ENCODE measurements at regions of chr18 and their contacts with region 1.

Region 1: DNA sequence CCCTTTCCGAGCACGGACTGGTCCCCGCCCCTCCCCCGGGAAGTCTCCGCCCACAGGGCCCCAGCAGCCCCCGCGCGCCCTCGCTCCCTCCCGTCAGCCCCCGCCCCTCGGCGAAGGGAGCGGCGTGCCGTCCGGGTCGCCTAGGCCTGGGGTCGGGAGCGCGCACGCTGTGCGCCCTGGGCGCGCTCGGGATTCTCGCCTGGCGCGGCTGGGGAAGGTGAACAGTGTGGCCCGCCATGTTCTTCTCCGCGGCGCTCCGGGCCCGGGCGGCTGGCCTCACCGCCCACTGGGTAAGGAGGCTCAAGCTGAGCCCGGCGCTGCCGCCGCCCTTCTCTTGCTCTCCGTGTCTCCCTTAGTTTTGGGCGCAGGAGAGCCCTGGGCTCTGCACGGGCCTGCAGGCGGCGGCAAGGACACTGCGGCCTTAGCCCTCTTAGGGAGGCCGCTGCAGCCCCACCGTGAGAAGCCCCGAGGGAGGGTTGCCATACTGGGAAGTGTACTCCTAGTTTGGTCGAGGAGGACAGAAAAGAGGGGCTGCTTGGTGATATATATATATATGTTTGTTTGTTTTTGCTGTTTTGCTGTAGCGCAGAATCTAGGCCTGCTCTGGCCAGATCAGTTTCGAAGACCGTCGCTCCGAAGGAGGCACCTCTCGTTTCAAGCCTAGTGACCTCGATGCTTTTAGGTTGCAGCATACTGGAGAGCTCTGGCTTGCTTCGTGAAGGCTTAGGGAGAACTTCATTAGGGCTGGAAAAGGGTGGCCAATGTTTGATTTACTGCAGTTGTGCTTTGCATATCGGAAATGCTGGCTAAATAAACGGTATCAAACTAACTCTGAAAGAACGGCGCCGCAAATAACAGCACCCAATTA is at the start of gene NDUFV2:
- DNase-seq: peak; percentile 98 to 99 (median 98)
- ATAC-seq: peak; percentile 98 to 99 (median 99)
- H3K4me3 ChIP-seq: peak within 1 kb of the TSS; percentile 27 to 89 (median 78)
- H3K27ac ChIP-seq: peak within 1 kb of the TSS; percentile 89 to 99 (median 95)
- H3K4me1 ChIP-seq: peaks cover 11 to 52% (median 48%) of the 10 kb centered on the region in 12 donors
- H3K27me3 ChIP-seq: no peaks in the 10 kb centered on the region
- CTCF ChIP-seq: peak in 1 of 12 donors; percentile 24
- POLR2A ChIP-seq: peak in 1 of 2 donors; percentile 88
- total RNA-seq, gene NDUFV2: 236 to 469 (median 407) TPM

Region 2: DNA sequence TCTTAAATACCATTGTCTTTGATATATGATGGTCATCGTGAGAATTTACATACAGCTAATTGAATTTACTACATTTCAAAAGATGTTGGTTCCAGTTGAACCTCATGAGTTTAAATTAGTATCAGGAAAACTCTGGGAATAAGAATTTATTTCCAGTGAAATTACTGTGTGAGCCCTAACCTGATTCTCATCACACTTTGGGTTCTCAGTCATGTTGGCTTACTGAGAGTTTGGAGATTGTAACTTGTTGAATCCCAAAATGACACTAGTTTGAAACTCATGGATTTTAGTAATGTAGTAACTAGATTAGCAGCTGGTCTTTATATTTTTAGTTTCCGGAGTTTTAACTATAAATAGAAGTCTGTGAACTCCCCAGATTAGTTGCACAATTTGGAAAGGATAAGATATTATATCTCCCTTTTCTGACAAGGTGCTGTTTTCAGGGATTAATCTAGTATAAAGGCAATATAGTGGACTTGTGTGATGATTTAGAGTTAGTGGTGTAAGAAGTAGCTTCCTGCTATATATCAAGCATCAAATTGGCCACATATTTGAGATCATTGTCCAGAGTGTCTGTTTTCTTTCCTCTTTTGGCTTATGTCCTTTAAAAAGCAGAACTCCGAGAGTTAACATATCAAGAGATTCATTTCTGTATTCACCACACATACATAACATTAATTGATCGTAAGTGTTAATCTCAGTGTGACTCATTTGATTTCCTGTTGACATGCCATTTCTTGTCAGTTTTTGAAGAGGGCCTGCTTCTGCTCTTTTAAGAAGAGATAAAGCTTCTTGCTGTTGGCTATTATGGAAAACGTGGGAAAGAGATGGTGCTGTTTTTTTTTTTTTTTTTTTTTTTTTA is 15.5 kb after region 1 on chr18:
- intact Hi-C with region 1: loop called in 1 of 10 experiments (anchors 2 kb)
- DNase-seq: no peak
- ATAC-seq: peak in 2 of 4 donors; percentile 6 to 18
- H3K4me3 ChIP-seq: peak overlapping the region in 4 of 12 donors; percentile 2 to 37 (median 10)
- H3K27ac ChIP-seq: peak overlapping the region in 11 of 12 donors; percentile 42 to 88 (median 76)
- H3K4me1 ChIP-seq: peaks cover 14 to 95% (median 78%) of the 10 kb centered on the region in 12 donors
- H3K27me3 ChIP-seq: no peaks in the 10 kb centered on the region
- CTCF ChIP-seq: no peak
- POLR2A ChIP-seq: no peak